ENCODE measurements at regions of chr1 and their contacts with region 1.

Region 1: DNA sequence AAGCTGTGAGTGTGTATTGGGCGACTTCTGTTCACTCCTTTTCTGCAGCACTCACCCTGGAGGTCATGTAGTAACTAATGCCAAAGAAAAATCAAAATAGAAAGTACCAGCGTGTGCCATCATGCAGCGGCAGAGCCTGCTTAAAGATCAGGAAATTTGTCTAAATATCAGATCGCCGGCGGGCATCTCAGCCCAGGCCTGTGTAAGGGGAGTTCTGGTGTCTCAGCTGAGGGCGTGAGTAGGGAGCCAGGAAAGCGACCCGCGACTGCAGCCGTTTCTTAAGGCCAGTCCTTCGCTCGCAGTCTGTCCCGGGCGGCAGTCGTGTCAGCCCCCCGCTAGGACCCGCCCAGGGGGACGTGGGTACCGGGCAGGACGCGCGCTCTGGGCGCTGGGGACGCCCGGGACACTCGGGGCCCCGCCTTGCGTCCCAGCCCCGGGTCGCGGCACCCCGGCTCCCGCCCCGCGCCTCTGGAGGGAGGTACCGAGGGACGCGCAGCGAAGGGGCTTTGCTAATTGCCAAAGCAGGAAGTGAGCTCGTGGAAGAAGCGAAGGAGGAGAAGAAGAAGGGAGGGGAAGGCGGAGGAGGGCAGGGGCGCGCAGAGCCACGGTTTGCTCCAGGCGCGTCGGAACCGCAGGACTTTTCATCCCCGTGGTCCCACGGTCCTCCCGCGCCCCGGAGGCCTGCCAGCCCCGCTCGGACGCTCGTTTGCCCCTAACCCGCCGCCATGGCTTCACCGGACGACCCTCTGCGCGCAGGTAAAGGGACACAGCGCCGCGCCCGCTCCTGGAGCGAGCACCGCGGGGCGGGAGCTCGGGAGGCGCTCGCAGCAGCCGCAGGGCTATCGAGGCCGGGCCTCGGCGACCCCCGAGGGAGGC is 1.1 kb downstream of the EDARADD start:
- DNase-seq: peak; percentile 39
- H3K4me3 Mint-ChIP-seq: peak overlapping the region; percentile 90
- H3K27ac Mint-ChIP-seq: peak overlapping the region; percentile 87
- H3K4me1 Mint-ChIP-seq: peaks cover 52% of the 10 kb centered on the region
- H3K27me3 Mint-ChIP-seq: peaks cover 17% of the 10 kb centered on the region

Region 2: DNA sequence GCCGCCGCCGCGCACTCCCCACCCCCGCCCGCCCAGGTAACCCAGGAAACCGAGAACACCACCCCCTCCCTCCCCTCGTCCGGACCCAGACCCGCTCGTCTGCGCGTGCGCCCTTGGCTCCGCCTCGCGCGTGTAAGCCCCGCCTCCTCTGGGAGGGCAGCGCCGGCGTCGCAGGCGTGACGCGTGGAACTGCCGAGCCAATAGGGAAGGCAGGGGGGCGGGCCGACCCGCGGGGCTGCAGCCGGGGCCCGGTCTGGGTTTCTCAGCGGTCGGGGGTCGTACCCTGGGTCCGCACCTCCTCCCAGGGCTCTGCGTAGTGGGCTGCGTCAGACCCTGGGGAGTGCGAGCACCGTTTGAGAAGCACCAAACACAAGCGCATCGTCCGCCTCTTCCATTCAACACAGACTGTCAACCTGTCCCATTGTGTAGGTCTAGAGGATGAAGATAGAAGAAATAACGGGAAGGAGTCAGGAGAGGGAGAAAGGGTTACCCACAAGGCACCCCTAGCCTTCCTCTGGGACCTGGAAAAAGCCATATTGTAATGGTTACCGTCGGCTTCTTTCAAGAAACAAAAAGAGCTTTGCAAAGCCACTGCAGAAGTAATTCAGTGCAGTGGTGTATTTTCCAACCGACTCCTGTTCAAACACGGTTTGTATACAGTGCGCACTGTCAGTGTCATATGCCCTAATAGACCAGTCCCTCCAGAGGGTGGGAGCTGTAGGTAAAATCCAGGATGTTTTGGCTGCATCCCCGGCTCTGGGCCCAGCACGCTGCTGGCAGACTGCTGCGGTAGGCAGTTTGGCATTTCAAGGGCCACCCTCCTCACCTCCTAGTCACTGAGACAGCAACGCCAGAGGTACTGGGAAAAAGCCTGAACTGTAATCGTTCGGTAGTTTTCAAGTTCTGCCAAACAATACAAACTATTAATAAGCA is 528.0 kb before region 1 on chr1:
- intact Hi-C with region 1: loop called (anchors 5 kb)
- DNase-seq: peak; percentile 99
- H3K4me3 Mint-ChIP-seq: peak overlapping the region; percentile 98
- H3K27ac Mint-ChIP-seq: peak overlapping the region; percentile 98
- H3K4me1 Mint-ChIP-seq: peaks cover 57% of the 10 kb centered on the region
- H3K27me3 Mint-ChIP-seq: no peaks in the 10 kb centered on the region

Region 3: DNA sequence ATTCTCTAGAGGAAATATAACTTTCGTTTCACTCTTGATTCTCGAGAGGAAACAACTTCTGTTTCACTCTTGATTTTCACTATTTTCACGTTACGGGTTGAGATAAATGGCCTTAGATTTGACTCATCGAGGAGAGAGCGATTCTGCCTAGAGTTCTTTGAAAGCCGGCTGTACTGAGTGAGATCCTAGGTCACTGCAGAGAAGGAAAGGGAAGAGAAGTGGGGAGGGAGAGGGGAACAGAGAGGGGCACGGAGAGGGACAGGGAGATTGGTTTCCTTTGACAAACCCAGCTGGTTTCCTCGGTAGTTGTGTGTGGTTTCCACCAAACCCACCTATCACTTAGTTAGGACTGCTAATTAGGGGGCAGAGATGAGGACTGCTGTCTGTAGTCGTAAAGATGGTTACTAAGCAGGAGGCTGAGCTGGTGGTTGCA is 274.4 kb before region 1 on chr1:
- intact Hi-C with region 1: loop called (anchors 5 kb)
- DNase-seq: no peak
- H3K4me3 Mint-ChIP-seq: peak overlapping the region; percentile 57
- H3K27ac Mint-ChIP-seq: peak overlapping the region; percentile 36
- H3K4me1 Mint-ChIP-seq: peaks cover 28% of the 10 kb centered on the region
- H3K27me3 Mint-ChIP-seq: peaks cover 15% of the 10 kb centered on the region

Region 4: DNA sequence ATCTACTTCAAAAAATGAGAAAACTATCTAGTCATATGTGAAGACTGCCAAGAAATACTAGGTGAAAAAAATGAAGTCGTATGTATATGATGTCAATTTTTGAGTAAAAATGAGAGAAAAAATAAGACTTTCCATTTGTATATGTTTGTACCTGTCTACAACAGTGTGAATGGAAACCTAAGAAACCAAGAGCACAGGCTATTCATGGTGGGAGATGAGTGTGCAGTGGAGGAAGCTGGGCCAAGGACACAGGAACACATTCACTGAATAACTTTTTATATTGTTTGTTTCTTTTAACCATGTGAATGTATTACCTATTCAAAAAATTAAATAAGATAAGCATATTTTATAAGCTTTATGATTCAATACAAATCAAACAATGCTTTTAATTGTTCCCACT is 180.4 kb before region 1 on chr1:
- intact Hi-C with region 1: loop called (anchors 1 kb)
- DNase-seq: no peak
- H3K4me3 Mint-ChIP-seq: no peak overlapping the region
- H3K27ac Mint-ChIP-seq: no peak overlapping the region
- H3K4me1 Mint-ChIP-seq: no peaks in the 10 kb centered on the region
- H3K27me3 Mint-ChIP-seq: no peaks in the 10 kb centered on the region

Region 5: GRCh38 chr1:236416165-236416564 is 21.0 kb after region 1 on chr1:
- intact Hi-C with region 1: loop called (anchors 1 kb)
- DNase-seq: no peak
- H3K4me3 Mint-ChIP-seq: peak overlapping the region; percentile 39
- H3K27ac Mint-ChIP-seq: peak overlapping the region; percentile 83
- H3K4me1 Mint-ChIP-seq: peaks cover 10% of the 10 kb centered on the region
- H3K27me3 Mint-ChIP-seq: peaks cover 2% of the 10 kb centered on the region

Region 6: DNA sequence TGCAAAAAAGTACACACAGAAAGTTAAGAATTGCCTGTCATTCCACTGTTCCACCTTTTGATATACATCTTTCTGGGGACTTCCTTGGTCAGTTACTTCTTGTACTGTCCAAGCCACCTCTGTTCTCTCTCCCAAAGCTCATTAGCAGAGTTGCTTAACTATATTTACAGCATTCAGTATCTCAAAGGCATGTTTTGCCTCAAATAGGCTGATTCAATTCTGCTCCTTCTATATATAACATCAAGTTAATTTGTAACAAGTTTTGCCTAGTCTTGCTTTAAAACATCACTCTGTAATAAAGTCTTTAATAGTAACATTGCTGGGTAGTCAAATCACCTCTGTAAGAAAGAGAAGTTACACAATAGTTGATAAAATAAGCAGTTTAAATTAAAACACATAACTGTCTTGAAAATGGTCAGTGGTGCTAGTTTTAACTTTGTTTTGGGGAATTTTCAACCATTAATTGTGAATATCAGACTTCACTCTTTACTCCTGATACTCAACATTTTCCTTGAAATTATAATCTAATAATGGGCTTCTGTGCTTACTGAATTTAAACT is 34.7 kb after region 1 on chr1:
- intact Hi-C with region 1: no loop called
- DNase-seq: no peak
- H3K4me3 Mint-ChIP-seq: no peak overlapping the region
- H3K27ac Mint-ChIP-seq: no peak overlapping the region
- H3K4me1 Mint-ChIP-seq: peaks cover 9% of the 10 kb centered on the region
- H3K27me3 Mint-ChIP-seq: no peaks in the 10 kb centered on the region

Region 7: GRCh38 chr1:236523701-236524141 is 128.6 kb after region 1 on chr1 and contains the start of gene LGALS8:
- intact Hi-C with region 1: loop called (anchors 2 kb)
- DNase-seq: peak; percentile 78
- H3K4me3 Mint-ChIP-seq: peak within 1 kb of the TSS; percentile 99
- H3K27ac Mint-ChIP-seq: peak within 1 kb of the TSS; percentile 100
- H3K4me1 Mint-ChIP-seq: peaks cover 36% of the 10 kb centered on the region
- H3K27me3 Mint-ChIP-seq: no peaks in the 10 kb centered on the region
- total RNA-seq, gene LGALS8: 56.6 and 66.2 TPM in 2 replicates

Region 8: GRCh38 chr1:236795035-236795756 is 400.1 kb after region 1 on chr1 and contains the start of gene MTR:
- intact Hi-C with region 1: loop called (anchors 5 kb)
- DNase-seq: peak; percentile 94
- H3K4me3 Mint-ChIP-seq: peak within 1 kb of the TSS; percentile 89
- H3K27ac Mint-ChIP-seq: peak within 1 kb of the TSS; percentile 96
- H3K4me1 Mint-ChIP-seq: peaks cover 37% of the 10 kb centered on the region
- H3K27me3 Mint-ChIP-seq: peaks cover 13% of the 10 kb centered on the region
- total RNA-seq, gene MTR: 48.9 and 49.2 TPM in 2 replicates